ENCODE measurements at regions of chr11 and their contacts with region 1.

Region 1: GRCh38 chr11:62591448-62592145 is at the start of gene TUT1:
- DNase-seq: peak; percentile 96 to 100
- ATAC-seq: peak; percentile 89 to 95
- H3K4me3 ChIP-seq: peak within 1 kb of the TSS; percentile 79
- H3K27ac ChIP-seq: peak within 1 kb of the TSS; percentile 90 to 91
- H3K4me1 ChIP-seq: peaks cover 49% of the 10 kb centered on the region
- CTCF ChIP-seq: no peak
- EP300 ChIP-seq: no peak
- POLR2A ChIP-seq: peak; percentile 87
- RAD21 ChIP-seq: no peak; a peak in 1 of 5 replicates
- polyA plus RNA-seq, gene TUT1: 12.9 and 15.5 TPM in 2 replicates

Region 2: DNA sequence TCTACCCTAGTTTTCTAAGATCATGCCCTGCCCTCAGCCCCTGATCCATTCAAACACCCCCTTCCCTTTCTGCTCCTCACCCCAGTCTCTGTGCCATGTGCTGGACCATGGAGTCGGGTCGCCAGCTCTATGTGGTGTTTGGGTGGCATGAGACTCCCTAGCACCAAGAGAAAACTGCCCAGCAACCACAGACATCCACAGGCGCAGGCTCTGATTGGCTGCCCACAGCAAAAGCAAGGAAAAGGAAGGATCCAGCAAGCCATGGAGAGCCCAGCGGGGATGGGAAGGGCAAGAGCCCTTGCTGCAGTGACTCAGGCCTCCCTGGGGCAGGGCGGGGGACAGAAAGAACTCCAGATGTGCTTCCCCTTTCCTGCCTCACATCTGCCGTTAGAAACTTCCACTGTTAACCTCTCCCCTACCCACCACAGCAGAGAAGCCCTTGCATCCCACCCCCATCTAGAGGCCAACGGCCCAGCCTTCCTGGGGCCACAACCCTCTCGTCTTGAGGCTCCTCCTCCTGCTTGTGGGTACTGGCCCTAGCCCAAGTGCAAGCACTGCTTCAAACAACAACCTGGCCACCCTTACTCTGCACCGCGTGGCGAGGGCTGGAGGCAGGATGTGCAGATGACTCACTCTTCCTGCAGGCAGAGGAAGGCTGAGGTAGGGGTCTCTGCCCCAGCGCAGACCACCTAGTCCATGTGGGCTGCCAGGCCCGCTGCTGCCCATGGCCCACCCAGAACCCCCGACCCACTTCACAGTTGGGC is 35.3 kb before region 1 on chr11:
- CTCF ChIA-PET with region 1: interaction called, 10 read pairs
- POLR2A ChIA-PET with region 1: interaction called, 31 read pairs
- DNase-seq: peak; percentile 95 to 99
- ATAC-seq: peak; percentile 55 to 76
- H3K4me3 ChIP-seq: peak overlapping the region; percentile 4; the same call in 1 of the 3 replicates
- H3K27ac ChIP-seq: peak overlapping the region; percentile 90 to 94
- H3K4me1 ChIP-seq: peaks cover 96% of the 10 kb centered on the region
- CTCF ChIP-seq: no peak
- EP300 ChIP-seq: no peak
- POLR2A ChIP-seq: no peak
- RAD21 ChIP-seq: peak in 1 of 2 experiments; percentile 10; a peak in 1 of 5 replicates

Region 3: DNA sequence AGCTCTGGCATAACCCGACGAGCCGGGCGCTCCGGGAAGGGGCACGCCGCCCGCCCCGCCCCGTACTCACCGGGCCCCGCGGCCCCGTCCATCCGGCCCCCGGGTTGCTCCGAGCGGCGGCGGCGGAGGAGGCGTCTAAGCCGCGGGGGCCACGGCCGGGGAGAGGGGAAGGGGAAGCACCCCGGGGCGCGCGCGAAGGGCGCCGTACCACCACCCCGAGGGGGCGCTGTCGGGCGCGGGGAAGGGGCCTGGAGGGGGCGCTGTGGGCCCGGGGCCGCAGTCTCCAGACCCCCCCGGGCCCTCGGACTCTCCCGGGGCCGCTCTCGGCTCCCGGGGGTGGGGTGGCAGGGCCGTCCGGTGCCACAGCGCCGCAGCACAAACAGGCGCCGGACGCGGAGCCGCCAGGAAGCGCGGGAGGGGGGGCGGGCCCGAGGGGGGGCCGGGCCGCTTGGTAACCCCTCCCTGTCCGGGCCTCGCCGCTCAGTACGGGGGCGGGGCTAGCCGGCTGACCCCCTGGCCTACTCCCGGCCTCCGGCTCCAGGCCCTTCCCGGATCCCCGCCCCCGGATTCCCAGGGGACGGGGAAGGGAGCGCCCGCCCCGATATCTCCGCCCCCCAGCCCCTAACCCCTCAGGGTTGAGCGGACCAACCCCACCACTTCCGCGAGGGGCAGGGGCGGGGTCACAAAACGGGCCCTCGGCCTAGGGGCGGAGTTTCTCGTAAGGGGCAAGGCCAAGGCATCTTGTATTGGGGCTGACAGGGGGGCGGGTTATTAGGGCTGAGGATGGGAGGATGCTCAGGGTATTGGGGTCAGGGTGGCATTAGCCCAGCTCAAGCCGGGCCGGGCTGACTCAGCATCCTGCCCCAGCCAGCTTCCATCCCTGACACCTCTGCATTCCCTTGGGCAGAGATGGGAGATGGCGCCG is 21.0 kb after region 1 on chr11 and contains the starts of genes EML3 and ROM1:
- CTCF ChIA-PET with region 1: interaction called, 24 read pairs
- POLR2A ChIA-PET with region 1: interaction called, 27 read pairs
- DNase-seq: peak; percentile 88
- ATAC-seq: peak; percentile 65 to 82
- H3K4me3 ChIP-seq: peak within 1 kb of the TSS; percentile 61
- H3K27ac ChIP-seq: peak within 1 kb of the TSS; percentile 80 to 98
- H3K4me1 ChIP-seq: peaks cover 29% of the 10 kb centered on the region
- CTCF ChIP-seq: peak; percentile 100
- EP300 ChIP-seq: no peak
- POLR2A ChIP-seq: no peak
- RAD21 ChIP-seq: peak in 1 of 2 experiments; percentile 59; a peak in 3 of 5 replicates
- polyA plus RNA-seq, gene EML3: 15.2 and 19.7 TPM in 2 replicates
- polyA plus RNA-seq, gene ROM1: 0.92 and 1.6 TPM in 2 replicates

Region 4: DNA sequence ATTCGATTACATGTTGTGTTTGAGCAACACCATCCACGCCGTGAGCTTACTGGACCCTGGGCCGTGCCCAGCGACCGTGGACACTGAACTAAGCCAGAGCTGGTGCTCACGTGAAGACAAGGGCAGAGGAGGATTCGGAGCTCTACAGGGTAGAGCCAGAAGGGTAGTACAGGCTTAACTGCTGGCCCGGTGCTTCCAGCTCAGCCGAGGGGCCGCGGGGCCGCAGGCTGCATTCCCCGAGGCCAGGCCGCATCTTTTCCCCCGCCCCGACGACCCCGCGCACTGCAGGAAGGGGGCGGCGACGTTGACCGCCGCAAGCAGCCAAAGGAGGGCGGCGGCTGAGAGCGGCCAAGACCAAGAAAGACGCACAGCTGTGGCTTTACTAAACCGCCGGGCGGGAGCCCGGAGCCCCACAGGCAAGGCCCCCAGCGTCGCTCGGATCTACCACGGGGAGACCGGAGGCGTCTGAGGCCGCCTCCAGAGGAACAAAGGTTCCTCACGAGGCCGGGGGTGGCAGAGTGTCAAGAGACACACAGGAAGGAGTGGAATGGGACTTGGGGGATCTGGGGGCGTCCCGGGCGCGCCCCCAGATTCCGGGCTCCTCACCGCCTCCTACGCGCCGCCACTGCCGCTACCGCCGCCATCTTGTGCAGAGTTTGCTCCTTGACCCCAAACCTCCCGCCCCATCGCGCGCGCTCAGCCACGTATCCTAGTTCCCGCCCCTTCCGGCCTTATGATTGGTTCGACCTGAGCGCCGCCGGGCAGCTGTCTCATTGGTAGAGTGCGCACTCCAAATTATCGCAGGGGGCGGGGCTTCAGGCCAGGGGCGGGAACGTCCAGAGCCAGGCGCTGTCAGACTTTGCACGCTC is 54.6 kb after region 1 on chr11 and contains the start of gene GANAB:
- CTCF ChIA-PET with region 1: interaction called, 3 read pairs
- POLR2A ChIA-PET with region 1: interaction called, 19 read pairs
- DNase-seq: peak; percentile 97 to 99
- ATAC-seq: peak; percentile 97 to 99
- H3K4me3 ChIP-seq: peak within 1 kb of the TSS; percentile 79
- H3K27ac ChIP-seq: peak within 1 kb of the TSS; percentile 94 to 97
- H3K4me1 ChIP-seq: peaks cover 11% of the 10 kb centered on the region
- CTCF ChIP-seq: no peak
- EP300 ChIP-seq: no peak
- POLR2A ChIP-seq: peak; percentile 89
- RAD21 ChIP-seq: no peak
- polyA plus RNA-seq, gene GANAB: 215 and 308 TPM in 2 replicates

Region 5: GRCh38 chr11:62671575-62672389 is 80.2 kb after region 1 on chr11 and contains the starts of genes LBHD1 and UQCC3:
- CTCF ChIA-PET with region 1: interaction called, 4 read pairs
- POLR2A ChIA-PET with region 1: interaction called, 49 read pairs
- DNase-seq: peak; percentile 86 to 92
- ATAC-seq: peak; percentile 81 to 86
- H3K4me3 ChIP-seq: peak within 1 kb of the TSS; percentile 90
- H3K27ac ChIP-seq: peak within 1 kb of the TSS; percentile 97 to 98
- H3K4me1 ChIP-seq: peaks cover 31% of the 10 kb centered on the region
- CTCF ChIP-seq: no peak
- EP300 ChIP-seq: no peak
- POLR2A ChIP-seq: peak; percentile 72
- RAD21 ChIP-seq: no peak
- polyA plus RNA-seq, gene LBHD1: 4.1 and 5.3 TPM in 2 replicates
- polyA plus RNA-seq, gene UQCC3: 13.9 and 20.2 TPM in 2 replicates

Measured in A549 (cell line).